PC-3 (cell line): ENCODE measurements at regions of chr20 and their contacts with region 1.

Region 1: GRCh38 chr20:14700639-14700960 is 363.2 kb upstream of the FLRT3 start:
- DNase-seq: peak; percentile 70
- ATAC-seq: peak; percentile 91
- H3K4me3 ChIP-seq: no peak overlapping the region
- H3K27ac ChIP-seq: no peak overlapping the region
- H3K4me1 ChIP-seq: peaks cover 12% of the 10 kb centered on the region
- H3K27me3 ChIP-seq: no peaks in the 10 kb centered on the region
- CTCF ChIP-seq: no peak

Region 2: GRCh38 chr20:14845199-14846160 is 144.9 kb after region 1 on chr20:
- CTCF ChIA-PET with region 1: no interaction called
- POLR2A ChIA-PET with region 1: no interaction called
- intact Hi-C with region 1: loop called (anchors 10 kb)
- DNase-seq: peak; percentile 95
- ATAC-seq: peak; percentile 100
- H3K4me3 ChIP-seq: no peak overlapping the region
- H3K27ac ChIP-seq: peak overlapping the region; percentile 47
- H3K4me1 ChIP-seq: peaks cover 18% of the 10 kb centered on the region
- H3K27me3 ChIP-seq: no peaks in the 10 kb centered on the region
- CTCF ChIP-seq: no peak